Right cardiac atrium (tissue), 5 donors: ENCODE measurements at regions of chr7 and their contacts with region 1.

Region 1: DNA sequence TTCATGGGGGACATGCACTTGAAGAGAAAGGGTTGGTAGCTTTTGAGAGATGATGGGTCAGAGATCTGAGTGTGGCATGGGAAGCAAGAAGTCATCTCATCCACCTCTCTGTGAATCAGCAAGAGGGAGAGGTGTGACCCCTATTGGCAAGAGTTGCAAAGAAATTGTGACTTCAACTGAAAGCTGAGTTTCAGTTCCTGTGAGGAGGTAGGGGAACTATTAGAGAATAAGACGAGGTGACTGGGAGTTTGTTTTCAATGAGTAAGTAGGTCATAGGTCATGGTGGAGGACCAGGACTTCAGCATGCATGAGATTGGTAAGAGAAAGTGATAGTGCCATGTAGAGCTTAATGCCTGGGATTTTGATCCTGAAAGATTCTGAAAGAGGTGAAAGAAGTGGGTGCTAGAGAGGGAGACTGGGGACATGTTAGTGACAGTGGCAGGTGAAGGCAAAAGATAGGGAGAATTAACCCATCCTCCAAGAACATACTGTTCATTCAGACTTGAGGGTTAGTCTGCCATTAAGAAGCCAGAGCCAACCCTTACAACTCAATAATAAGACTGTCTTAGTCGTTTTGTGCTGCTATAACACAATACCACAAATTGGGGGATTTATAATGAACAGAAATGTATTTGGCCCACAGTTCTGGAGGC is 75.5 kb upstream of the CAPZA2 start:
- DNase-seq: no peak
- ATAC-seq: peak; percentile 40 to 46
- H3K4me3 ChIP-seq: no peak overlapping the region
- H3K27ac ChIP-seq: no peak overlapping the region
- H3K4me1 ChIP-seq: peaks cover 2% of the 10 kb centered on the region
- H3K27me3 ChIP-seq: no peaks in the 10 kb centered on the region

Region 2: DNA sequence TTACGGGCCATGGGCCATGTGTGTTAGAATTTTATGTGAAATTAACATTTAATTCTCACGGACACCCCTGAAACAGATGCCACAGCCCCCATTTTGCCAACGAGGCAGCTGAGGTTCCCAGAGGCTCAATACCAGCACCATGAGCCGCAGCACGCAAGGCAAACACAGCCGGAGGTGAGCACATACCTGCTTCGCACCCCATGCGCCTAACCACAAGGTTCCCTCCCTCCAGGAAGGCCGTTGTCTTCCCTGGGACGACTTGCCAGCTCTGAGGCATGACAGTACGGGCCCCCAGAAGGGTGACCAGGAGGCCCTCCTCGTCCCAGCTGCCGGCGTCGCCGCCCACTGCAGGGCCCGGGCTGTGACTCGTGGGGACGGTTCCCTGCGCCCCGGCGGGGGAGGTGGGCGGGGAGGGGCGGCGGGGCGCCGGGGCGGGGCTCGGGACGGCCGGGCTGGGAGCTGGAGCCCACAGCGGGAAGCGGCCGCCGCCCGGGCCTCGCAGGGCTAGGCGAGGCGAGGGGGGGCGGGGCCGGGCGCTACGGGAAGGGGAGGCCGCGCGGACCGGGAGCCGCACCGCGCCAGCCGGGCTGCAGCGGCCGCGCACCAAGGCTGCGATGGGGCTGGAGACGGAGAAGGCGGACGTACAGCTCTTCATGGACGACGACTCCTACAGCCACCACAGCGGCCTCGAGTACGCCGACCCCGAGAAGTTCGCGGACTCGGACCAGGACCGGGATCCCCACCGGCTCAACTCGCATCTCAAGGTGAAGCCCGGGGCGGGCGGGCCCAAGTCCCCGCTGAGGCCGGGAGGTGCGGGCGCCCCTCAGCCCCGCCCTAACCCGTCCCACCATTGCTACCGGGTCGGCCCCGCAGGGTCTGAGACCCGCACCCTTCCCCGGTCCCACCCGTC is 287.5 kb before region 1 on chr7 and contains the start of gene CAV2:
- intact Hi-C with region 1: no loop called
- DNase-seq: peak; percentile 82 to 92 (median 92)
- ATAC-seq: peak; percentile 92 to 93
- H3K4me3 ChIP-seq: peak within 1 kb of the TSS; percentile 67
- H3K27ac ChIP-seq: peak within 1 kb of the TSS; percentile 95
- H3K4me1 ChIP-seq: peaks cover 4% of the 10 kb centered on the region
- H3K27me3 ChIP-seq: no peaks in the 10 kb centered on the region
- total RNA-seq, gene CAV2: 179 to 233 (median 200) TPM

Region 3: GRCh38 chr7:116671681-116672595 is 115.0 kb before region 1 on chr7 and contains the start of gene MET:
- intact Hi-C with region 1: loop called in 2 of 4 experiments (anchors 10 kb)
- DNase-seq: peak; percentile 72 to 86 (median 85)
- ATAC-seq: peak; percentile 90 to 94
- H3K4me3 ChIP-seq: peak within 1 kb of the TSS; percentile 55
- H3K27ac ChIP-seq: peak within 1 kb of the TSS; percentile 61
- H3K4me1 ChIP-seq: no peaks in the 10 kb centered on the region
- H3K27me3 ChIP-seq: no peaks in the 10 kb centered on the region
- total RNA-seq, gene MET: 8.4 to 20.0 (median 14.7) TPM